PC-3 (cell line): ENCODE measurements at regions of chr3 and their contacts with region 1.

Region 1: DNA sequence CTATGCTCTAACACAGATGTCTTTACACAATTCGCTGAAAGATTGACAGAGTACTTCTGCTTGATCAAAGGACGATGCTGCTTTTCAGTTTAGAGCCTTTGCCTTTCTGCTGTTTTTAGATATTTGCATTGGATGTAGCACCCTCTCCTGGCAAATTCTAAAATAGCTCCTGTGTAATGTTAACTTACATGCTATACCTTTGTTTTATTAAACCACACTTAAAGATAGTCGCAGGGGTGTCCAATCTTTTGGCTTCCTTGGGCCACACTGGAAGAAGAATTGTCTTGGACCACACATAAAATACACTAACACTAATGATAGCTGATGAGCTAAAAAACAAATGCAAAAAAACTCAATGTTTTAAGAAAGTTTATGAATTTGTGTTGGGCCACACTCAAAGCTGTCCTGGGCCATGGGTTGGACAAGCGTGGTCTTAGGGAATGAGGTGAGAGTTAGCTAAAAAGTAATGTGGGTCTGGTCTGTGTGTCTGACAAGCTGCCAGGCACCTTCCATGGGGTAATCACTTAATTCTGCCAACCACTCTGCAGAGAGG is 62.9 kb downstream of the ATG7 start:
- DNase-seq: peak; percentile 86
- ATAC-seq: peak; percentile 81
- H3K4me3 ChIP-seq: no peak overlapping the region
- H3K27ac ChIP-seq: no peak overlapping the region
- H3K4me1 ChIP-seq: peaks cover 19% of the 10 kb centered on the region
- H3K27me3 ChIP-seq: no peaks in the 10 kb centered on the region
- CTCF ChIP-seq: peak; percentile 79

Region 2: DNA sequence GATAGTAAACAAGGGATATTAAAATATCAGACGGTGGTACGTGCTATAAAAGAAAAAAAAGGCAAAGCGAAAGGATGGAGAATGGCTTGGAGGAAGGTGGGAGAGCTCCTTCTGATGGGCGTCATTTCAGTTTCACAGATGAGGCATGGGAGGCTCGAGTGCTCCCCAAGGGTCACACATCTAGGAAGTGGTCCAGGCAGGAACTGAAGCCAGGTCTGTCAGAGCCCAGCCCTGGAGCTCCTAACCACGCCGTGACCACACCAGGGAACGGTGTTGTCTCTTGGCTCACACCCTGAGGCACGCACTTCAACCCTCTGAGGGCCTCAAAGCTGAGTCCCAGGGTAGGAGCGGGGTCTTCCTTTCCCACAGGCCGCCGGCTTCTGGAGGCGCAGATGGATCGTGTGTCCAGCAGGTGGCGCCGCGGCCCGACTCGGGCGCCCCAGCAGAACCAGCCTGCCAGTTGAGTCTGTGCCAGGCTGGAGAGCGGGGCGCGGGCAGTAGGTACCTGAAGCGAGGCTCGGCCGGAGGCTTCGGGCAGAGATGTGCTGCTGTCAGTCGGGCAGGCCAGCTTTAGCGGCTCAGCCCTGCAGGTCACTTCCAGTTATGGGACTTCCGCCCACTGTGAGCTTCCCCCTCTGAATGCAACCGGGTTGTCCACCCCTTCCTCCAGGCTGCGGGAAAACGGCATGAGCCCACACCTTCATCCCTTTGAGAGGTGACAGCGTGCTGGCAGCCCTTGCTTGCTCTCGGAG is 274.5 kb before region 1 on chr3:
- CTCF ChIA-PET with region 1: no interaction called
- POLR2A ChIA-PET with region 1: no interaction called
- intact Hi-C with region 1: loop called (anchors 1 kb)
- DNase-seq: peak; percentile 83
- ATAC-seq: peak; percentile 80
- H3K4me3 ChIP-seq: peak overlapping the region; percentile 44
- H3K27ac ChIP-seq: no peak overlapping the region
- H3K4me1 ChIP-seq: no peaks in the 10 kb centered on the region
- H3K27me3 ChIP-seq: no peaks in the 10 kb centered on the region
- CTCF ChIP-seq: peak; percentile 96

Region 3: DNA sequence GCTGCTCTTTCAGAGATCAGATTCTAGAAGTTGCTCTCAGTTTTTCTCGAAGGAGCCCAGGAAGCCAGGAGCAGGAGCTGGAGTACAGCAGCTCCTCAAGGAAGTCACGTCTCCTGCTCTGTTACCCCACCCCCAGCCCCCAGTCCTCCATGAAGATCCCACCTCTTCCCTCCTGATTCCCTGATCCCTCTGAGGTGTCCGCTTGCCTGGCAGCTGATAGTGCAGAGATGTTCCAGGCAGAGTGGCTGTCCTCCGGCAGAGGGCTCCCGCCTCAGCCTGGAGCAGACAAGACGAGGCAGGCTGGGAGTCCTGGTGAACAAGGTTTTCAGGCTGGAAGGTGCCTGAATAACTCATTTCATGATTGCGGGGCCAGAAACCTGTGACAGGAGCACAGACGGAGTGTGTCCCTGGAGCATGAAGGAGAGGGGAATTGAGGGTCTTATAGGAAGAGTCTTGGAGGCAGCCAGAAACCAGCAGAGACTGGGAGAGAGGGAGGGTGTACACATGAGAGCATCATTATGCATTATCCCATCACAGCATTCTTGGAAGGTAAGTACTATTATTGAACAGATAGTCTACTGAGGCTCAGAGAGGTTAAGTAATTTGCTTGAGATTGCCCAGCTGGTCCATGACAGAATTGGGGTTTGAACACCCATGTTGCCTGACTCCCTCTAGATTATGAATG is 179.6 kb before region 1 on chr3:
- CTCF ChIA-PET with region 1: interaction called, 4 read pairs
- POLR2A ChIA-PET with region 1: no interaction called
- intact Hi-C with region 1: loop called (anchors 1 kb)
- DNase-seq: peak; percentile 85
- ATAC-seq: peak; percentile 89
- H3K4me3 ChIP-seq: peak overlapping the region; percentile 74
- H3K27ac ChIP-seq: no peak overlapping the region
- H3K4me1 ChIP-seq: peaks cover 12% of the 10 kb centered on the region; the same call in 1 of the 2 replicates
- H3K27me3 ChIP-seq: no peaks in the 10 kb centered on the region
- CTCF ChIP-seq: peak; percentile 92

Region 4: DNA sequence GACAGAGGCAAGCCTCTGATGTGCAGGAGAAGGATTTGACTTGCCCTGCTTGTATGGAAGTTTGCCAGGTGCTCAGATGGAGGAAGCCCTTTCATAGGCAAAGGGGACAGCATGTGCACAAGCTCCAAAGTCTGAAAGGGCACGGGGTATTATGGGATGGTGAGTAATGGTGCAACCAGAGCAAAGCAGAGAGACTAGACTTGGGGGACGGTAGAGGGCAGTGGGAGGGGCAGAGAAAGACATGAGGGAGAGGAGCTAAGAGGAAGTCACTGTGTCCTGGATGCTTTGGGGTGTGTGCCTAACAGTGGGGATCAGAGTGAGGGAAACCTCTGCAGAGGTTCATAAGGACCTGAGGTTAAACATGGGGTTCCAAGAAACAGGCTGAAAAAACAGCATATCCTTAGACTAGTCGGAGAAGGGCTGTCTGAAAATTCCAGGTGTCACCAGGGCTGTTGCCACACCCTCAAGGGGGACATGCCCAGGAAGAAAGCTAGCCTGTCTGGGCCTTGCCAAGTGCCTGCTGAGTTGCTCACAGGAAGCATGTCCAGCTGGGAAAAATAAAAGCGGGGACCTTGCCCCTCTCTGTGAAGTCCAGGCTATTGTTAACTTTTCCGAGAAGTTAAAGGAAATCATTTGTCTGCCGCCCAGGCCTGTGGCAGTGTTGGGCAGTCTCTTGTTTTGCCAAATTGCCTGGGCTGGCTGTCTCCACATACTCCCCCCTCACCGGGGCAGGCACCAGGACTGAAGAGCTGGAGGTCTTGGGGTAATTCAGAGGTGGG is 133.7 kb before region 1 on chr3:
- CTCF ChIA-PET with region 1: no interaction called
- POLR2A ChIA-PET with region 1: no interaction called
- intact Hi-C with region 1: no loop called
- DNase-seq: peak; percentile 81
- ATAC-seq: peak; percentile 81
- H3K4me3 ChIP-seq: no peak overlapping the region
- H3K27ac ChIP-seq: peak overlapping the region; percentile 55
- H3K4me1 ChIP-seq: peaks cover 33% of the 10 kb centered on the region
- H3K27me3 ChIP-seq: no peaks in the 10 kb centered on the region
- CTCF ChIP-seq: no peak

Region 5: DNA sequence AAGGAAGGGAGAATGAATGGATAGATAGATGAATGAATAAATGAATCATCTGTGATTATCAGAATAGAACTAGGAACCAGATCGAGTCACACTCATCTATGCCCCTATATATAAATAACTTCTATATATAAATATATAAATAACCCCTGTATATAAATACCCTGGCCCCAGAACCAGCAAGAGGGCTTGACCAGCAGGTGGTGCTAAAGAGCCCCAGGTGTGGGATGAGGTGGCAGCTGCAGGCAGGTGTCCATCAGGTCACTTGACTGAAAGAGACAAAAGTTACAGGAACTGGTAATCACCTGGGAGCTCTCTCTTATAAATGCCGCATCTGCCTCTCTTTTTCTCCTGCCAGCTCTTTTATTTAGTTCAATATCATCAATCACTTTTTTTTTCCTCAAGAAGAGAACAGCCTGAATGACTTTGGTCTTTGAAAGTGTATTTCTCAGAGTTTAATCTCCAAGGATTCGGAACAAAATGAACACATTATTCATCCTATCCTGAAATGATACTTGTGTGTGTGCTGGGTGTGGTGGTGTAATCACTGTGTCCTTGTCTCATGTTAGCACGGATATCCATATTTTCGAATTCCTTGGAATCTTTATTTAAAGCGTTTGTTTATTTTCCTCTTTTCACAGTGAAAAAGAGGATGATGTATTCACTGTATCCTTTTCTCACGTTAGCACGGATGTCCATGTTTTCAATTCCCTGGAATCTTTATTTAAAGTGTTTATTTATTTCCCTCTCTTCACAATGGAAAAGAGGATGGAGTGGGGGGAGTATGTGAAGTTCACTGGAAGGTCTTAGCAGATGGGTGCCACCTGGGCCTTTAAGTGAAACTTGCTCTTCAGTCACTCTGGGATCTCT is 98.3 kb before region 1 on chr3:
- CTCF ChIA-PET with region 1: interaction called, 7 read pairs
- POLR2A ChIA-PET with region 1: interaction called, 3 read pairs
- intact Hi-C with region 1: loop called (anchors 1 kb)
- DNase-seq: peak; percentile 94
- ATAC-seq: peak; percentile 62
- H3K4me3 ChIP-seq: no peak overlapping the region
- H3K27ac ChIP-seq: peak overlapping the region; percentile 94
- H3K4me1 ChIP-seq: peaks cover 34% of the 10 kb centered on the region
- H3K27me3 ChIP-seq: no peaks in the 10 kb centered on the region
- CTCF ChIP-seq: peak; percentile 77

Region 6: GRCh38 chr3:11260460-11260859 is 74.7 kb before region 1 on chr3:
- CTCF ChIA-PET with region 1: no interaction called
- POLR2A ChIA-PET with region 1: no interaction called
- intact Hi-C with region 1: loop called (anchors 2 kb)
- DNase-seq: no peak
- ATAC-seq: no peak
- H3K4me3 ChIP-seq: no peak overlapping the region
- H3K27ac ChIP-seq: no peak overlapping the region
- H3K4me1 ChIP-seq: no peaks in the 10 kb centered on the region
- H3K27me3 ChIP-seq: no peaks in the 10 kb centered on the region
- CTCF ChIP-seq: no peak

Region 7: GRCh38 chr3:11288786-11289682 is 46.1 kb before region 1 on chr3:
- CTCF ChIA-PET with region 1: no interaction called
- POLR2A ChIA-PET with region 1: interaction called, 3 read pairs
- intact Hi-C with region 1: loop called (anchors 5 kb)
- DNase-seq: peak; percentile 94
- ATAC-seq: peak; percentile 79
- H3K4me3 ChIP-seq: peak overlapping the region; percentile 55
- H3K27ac ChIP-seq: peak overlapping the region; percentile 97
- H3K4me1 ChIP-seq: peaks cover 61% of the 10 kb centered on the region
- H3K27me3 ChIP-seq: no peaks in the 10 kb centered on the region
- CTCF ChIP-seq: no peak

Region 8: DNA sequence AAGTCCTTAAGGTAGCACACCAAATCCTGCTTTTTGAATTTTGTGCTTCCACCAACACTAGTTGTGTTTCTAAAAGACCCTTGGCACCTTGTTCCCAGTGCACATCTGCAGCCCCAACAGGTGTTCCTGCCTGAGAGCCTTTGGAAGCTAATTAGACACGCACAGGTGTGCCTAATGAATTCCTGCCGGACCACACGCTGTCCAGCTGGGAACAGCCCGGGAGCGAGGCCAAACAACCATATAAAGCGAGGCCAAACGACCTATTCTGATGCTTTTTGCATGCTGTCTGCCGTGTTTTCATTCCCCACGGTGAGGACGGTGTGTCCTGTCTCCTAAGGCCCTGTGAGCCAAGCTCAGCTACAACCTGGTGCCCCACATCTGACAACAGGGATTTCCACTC is 36.6 kb after region 1 on chr3:
- CTCF ChIA-PET with region 1: no interaction called
- POLR2A ChIA-PET with region 1: no interaction called
- intact Hi-C with region 1: loop called (anchors 1 kb)
- DNase-seq: no peak
- ATAC-seq: no peak
- H3K4me3 ChIP-seq: no peak overlapping the region
- H3K27ac ChIP-seq: no peak overlapping the region
- H3K4me1 ChIP-seq: peaks cover 5% of the 10 kb centered on the region; the same call in 1 of the 2 replicates
- H3K27me3 ChIP-seq: no peaks in the 10 kb centered on the region
- CTCF ChIP-seq: no peak